GM12878 (cell line): ENCODE measurements at regions of chr22 and their contacts with region 1.

Region 1: DNA sequence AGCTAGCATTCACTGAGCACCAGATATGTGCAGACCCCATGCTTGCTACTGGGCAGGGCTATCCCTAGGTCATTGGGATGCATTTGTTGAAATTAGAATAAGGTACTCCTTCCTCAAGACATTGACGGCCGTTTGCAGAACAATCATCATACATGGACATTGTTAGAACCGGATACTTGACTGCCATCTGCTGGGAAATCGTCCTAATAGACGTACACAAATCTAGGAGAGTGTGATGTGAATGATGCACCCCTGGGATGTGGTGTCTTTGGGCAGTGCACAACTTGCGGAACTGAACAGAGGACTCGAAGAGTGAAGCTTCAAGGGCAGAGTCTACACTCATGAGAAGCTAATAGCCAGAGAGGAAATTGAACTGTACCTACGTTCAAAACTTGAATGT is 35.9 kb downstream of the MYO18B start:
- DNase-seq: peak; percentile 11
- ATAC-seq: peak; percentile 70
- H3K4me3 ChIP-seq: no peak overlapping the region
- H3K27ac ChIP-seq: no peak overlapping the region
- H3K4me1 ChIP-seq: no peaks in the 10 kb centered on the region
- H3K27me3 ChIP-seq: no peaks in the 10 kb centered on the region
- CTCF ChIP-seq: peak; percentile 25 to 44 (median 44); a peak in 5 of 6 replicates
- EP300 ChIP-seq: no peak
- POLR2A ChIP-seq: no peak
- RAD21 ChIP-seq: peak; percentile 36; the same call in 1 of the 2 replicates

Region 2: GRCh38 chr22:25554238-25554671 is 223.6 kb before region 1 on chr22:
- CTCF ChIA-PET with region 1: no interaction called
- POLR2A ChIA-PET with region 1: no interaction called
- RAD21 ChIA-PET with region 1: no interaction called
- SMC1A ChIA-PET with region 1: interaction called, 3 read pairs
- in situ Hi-C with region 1: loop called (anchors 5 kb)
- intact Hi-C with region 1: no loop called
- DNase-seq: no peak
- ATAC-seq: peak; percentile 54; the same call in 2 of the 3 replicates
- H3K4me3 ChIP-seq: no peak overlapping the region
- H3K27ac ChIP-seq: no peak overlapping the region
- H3K4me1 ChIP-seq: peaks cover 3% of the 10 kb centered on the region; the same call in 1 of the 2 replicates
- H3K27me3 ChIP-seq: no peaks in the 10 kb centered on the region
- CTCF ChIP-seq: no peak
- EP300 ChIP-seq: no peak
- POLR2A ChIP-seq: no peak
- RAD21 ChIP-seq: no peak